ENCODE measurements at regions of chr10 and their contacts with region 1.

Region 1: GRCh38 chr10:15168781-15169554 is 475 bp upstream of the NMT2 start:
- DNase-seq: peak; percentile 98
- H3K4me3 ChIP-seq: no peak overlapping the region
- H3K27ac ChIP-seq: no peak overlapping the region
- H3K4me1 ChIP-seq: no peaks in the 10 kb centered on the region
- H3K27me3 ChIP-seq: no peaks in the 10 kb centered on the region
- CTCF ChIP-seq: no peak
- POLR2A ChIP-seq: peak; percentile 53

Region 2: DNA sequence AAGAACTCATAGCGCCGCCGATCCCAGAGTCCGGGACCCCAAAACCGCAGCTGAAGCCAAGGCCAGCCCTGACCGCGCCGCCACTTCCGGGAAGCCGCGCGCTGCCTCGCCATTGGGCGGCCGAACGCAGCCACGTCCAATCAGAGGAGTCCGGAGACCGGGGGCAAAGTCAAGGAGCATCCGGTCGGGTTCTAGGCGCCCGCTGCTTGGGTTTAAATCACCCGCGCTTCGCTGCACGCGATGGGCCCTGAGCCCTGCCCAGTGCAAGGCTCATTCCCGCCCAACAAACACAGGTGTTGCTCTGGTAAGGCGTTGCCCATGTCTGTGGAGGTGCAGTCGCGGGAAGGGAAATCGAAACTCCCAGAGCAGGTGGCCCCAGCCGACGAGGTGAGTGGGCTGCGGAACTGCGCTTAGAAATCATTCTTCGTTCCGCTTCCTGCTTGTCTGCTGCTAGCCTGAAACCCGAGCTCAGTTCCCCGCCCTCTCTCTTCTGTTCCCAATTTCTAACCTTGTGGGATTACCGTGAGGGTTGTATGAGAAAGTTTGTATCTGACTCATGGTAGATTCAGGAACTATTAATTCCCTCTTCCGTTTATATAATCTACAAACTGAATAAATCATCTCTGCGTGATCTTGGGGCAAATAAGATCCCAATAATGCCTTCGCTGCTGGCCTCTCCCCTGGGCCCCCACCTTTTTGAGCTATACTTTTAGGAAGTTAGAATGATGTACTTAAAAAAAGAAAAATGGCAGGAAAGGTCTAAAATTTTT is 214.8 kb before region 1 on chr10 and contains the start of gene DCLRE1C:
- intact Hi-C with region 1: loop called (anchors 5 kb)
- DNase-seq: peak; percentile 92
- H3K4me3 ChIP-seq: peak within 1 kb of the TSS; percentile 69 to 72
- H3K27ac ChIP-seq: peak within 1 kb of the TSS; percentile 80 to 85
- H3K4me1 ChIP-seq: no peaks in the 10 kb centered on the region
- H3K27me3 ChIP-seq: no peaks in the 10 kb centered on the region
- CTCF ChIP-seq: peak in 2 of 4 experiments; percentile 1 to 5
- POLR2A ChIP-seq: peak; percentile 19
- total RNA-seq, gene DCLRE1C: 11.5 to 20.8 TPM

Region 3: GRCh38 chr10:15123749-15124184 is 45.2 kb before region 1 on chr10:
- intact Hi-C with region 1: no loop called
- DNase-seq: peak; percentile 23
- H3K4me3 ChIP-seq: no peak overlapping the region
- H3K27ac ChIP-seq: peak overlapping the region; percentile 27 to 41
- H3K4me1 ChIP-seq: no peaks in the 10 kb centered on the region
- H3K27me3 ChIP-seq: no peaks in the 10 kb centered on the region
- CTCF ChIP-seq: no peak
- POLR2A ChIP-seq: no peak